ENCODE measurements at regions of chr17 and their contacts with region 1.

Region 1: DNA sequence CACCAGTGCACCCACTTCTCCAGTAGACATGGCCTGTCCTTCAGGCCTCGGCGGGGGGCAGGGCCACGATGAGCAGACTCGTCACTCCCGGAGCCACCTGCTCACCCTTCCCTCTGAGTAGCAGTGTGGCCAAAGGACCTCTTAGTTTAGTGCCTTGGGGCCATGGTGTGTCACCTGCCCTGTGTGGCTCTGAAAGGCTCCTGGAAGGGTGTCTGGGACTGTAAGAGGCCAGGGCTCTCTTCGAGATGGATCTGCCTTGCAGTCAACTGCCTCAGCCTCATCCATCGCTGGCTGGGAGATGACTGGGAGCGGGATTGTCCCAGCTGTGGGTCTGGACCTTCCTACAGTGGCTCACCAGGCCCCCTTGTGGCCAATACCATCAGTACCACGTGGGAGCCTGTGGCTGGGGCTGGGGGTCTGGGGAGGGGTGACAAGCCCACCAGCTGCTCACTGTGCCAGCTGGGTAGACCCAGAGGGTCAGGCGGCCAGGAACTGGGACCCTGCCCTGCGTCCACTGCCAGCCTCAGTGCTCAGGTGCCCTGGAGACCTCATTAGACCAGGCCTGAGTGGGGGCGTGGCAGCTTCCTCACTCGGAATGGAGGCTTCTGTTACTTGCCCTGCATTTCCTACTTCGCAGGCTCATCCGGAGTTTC is 133.4 kb downstream of the OR1D5 start:
- DNase-seq: peak; percentile 19
- ATAC-seq: peak; percentile 94
- H3K4me3 ChIP-seq: no peak overlapping the region
- H3K27ac ChIP-seq: no peak overlapping the region
- H3K4me1 ChIP-seq: peaks cover 0 to 4% of the 10 kb centered on the region in 2 experiments; a peak in 1 of 4 replicates
- H3K27me3 ChIP-seq: no peaks in the 10 kb centered on the region
- CTCF ChIP-seq: peak; percentile 72 to 83 (median 75)
- POLR2A ChIP-seq: no peak
- RAD21 ChIP-seq: peak; percentile 88

Region 2: DNA sequence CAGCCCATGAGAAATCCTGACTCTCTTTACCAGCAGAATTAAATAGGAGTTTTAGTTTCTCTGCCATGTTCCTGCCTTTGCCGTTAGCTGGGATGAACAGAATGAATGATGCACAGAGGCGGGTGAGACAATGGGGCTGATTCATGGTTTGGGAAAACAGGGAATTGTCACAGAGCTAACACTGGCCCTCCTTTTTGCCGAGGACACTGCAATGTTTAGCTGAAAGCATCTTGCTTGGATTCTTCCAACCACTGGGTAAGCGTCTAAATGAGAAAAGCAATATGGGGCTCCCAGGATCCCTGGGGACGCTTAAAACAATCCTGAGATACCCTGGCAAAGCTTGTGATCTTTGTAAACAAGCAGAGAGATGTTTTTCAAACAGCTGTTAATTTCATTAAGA is 349.3 kb before region 1 on chr17:
- CTCF ChIA-PET with region 1: no interaction called
- POLR2A ChIA-PET with region 1: no interaction called
- RAD21 ChIA-PET with region 1: no interaction called
- intact Hi-C with region 1: no loop called
- DNase-seq: no peak
- ATAC-seq: no peak
- H3K4me3 ChIP-seq: no peak overlapping the region
- H3K27ac ChIP-seq: no peak overlapping the region
- H3K4me1 ChIP-seq: no peaks in the 10 kb centered on the region
- H3K27me3 ChIP-seq: no peaks in the 10 kb centered on the region
- CTCF ChIP-seq: no peak
- POLR2A ChIP-seq: no peak
- RAD21 ChIP-seq: no peak

Region 3: DNA sequence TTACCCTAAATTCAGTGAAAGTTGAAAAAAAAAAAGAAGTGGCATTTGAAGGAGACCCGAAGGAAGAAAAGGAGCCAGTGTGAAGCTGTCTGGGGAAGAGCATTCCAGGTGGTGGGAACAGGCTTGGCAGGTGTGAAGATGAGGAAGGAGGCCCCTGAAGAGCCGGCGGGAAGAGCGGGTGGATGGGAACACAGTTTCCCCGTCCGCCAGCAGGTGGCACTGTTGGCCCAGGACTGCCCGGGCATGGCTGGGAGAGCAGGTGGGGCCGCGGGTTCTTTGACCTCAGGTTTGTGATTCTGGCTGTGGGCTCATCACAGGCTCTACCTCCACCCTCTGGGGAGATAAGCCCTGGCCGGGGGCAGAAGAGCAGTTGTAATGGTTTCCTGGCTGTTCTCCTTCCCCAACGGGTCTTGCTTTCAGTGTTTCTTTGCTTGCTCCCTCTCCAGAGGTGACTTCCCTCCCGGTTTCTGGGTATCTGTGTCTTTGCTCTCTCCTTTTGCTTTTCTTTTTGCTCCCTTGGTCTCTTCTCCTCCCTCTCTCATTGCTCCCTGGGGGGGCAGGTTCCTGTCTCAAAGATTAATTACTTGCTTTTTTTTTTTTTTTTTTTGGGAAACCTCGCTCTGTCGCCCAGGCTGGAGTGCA is 101.5 kb before region 1 on chr17:
- CTCF ChIA-PET with region 1: interaction called, 3 read pairs
- POLR2A ChIA-PET with region 1: no interaction called
- RAD21 ChIA-PET with region 1: interaction called in 1 of 2 experiments, 7 read pairs
- intact Hi-C with region 1: loop called (anchors 1 kb)
- DNase-seq: peak; percentile 43
- ATAC-seq: peak; percentile 95
- H3K4me3 ChIP-seq: no peak overlapping the region
- H3K27ac ChIP-seq: no peak overlapping the region
- H3K4me1 ChIP-seq: peaks cover 0 to 3% of the 10 kb centered on the region in 2 experiments; a peak in 3 of 4 replicates
- H3K27me3 ChIP-seq: no peaks in the 10 kb centered on the region
- CTCF ChIP-seq: peak; percentile 82 to 93 (median 90)
- POLR2A ChIP-seq: no peak
- RAD21 ChIP-seq: peak; percentile 96

Region 4: GRCh38 chr17:2847381-2848333 is 82.3 kb before region 1 on chr17:
- CTCF ChIA-PET with region 1: interaction called, 31 read pairs
- POLR2A ChIA-PET with region 1: no interaction called
- RAD21 ChIA-PET with region 1: interaction called, 7 to 12 read pairs
- intact Hi-C with region 1: loop called (anchors 1 kb)
- DNase-seq: no peak
- ATAC-seq: no peak
- H3K4me3 ChIP-seq: no peak overlapping the region
- H3K27ac ChIP-seq: no peak overlapping the region
- H3K4me1 ChIP-seq: peaks cover 0 to 11% of the 10 kb centered on the region in 2 experiments; a peak in 1 of 4 replicates
- H3K27me3 ChIP-seq: no peaks in the 10 kb centered on the region
- CTCF ChIP-seq: no peak
- POLR2A ChIP-seq: no peak
- RAD21 ChIP-seq: no peak

Region 5: GRCh38 chr17:2853722-2854518 is 76.1 kb before region 1 on chr17:
- CTCF ChIA-PET with region 1: interaction called, 31 read pairs
- POLR2A ChIA-PET with region 1: no interaction called
- RAD21 ChIA-PET with region 1: interaction called, 7 to 12 read pairs
- intact Hi-C with region 1: loop called (anchors 1 kb)
- DNase-seq: no peak
- ATAC-seq: peak; percentile 60
- H3K4me3 ChIP-seq: peak overlapping the region; percentile 69 to 85
- H3K27ac ChIP-seq: peak overlapping the region; percentile 49; the same call in 1 of the 2 replicates
- H3K4me1 ChIP-seq: peaks cover 9 to 16% of the 10 kb centered on the region in 2 experiments
- H3K27me3 ChIP-seq: no peaks in the 10 kb centered on the region
- CTCF ChIP-seq: no peak
- POLR2A ChIP-seq: no peak
- RAD21 ChIP-seq: no peak